PC-9 (cell line): ENCODE measurements at regions of chr1 and their contacts with region 1.

Region 1: GRCh38 chr1:23559136-23559984 is at the start of gene ID3:
- DNase-seq: peak; percentile 87 to 96
- H3K4me3 ChIP-seq: peak within 1 kb of the TSS; percentile 67
- H3K27ac ChIP-seq: peak within 1 kb of the TSS; percentile 96
- H3K4me1 ChIP-seq: peaks cover 42% of the 10 kb centered on the region
- H3K27me3 ChIP-seq: no peaks in the 10 kb centered on the region
- CTCF ChIP-seq: no peak
- total RNA-seq, gene ID3: 10.4 and 24.7 TPM in 2 replicates

Region 2: GRCh38 chr1:23544444-23545389 is 14.6 kb before region 1 on chr1:
- CTCF ChIA-PET with region 1: no interaction called
- POLR2A ChIA-PET with region 1: no interaction called
- intact Hi-C with region 1: no loop called
- DNase-seq: peak; percentile 53 to 73
- H3K4me3 ChIP-seq: no peak overlapping the region
- H3K27ac ChIP-seq: no peak overlapping the region
- H3K4me1 ChIP-seq: peaks cover 4% of the 10 kb centered on the region; the same call in 1 of the 2 replicates
- H3K27me3 ChIP-seq: no peaks in the 10 kb centered on the region
- CTCF ChIP-seq: peak; percentile 86

Region 3: DNA sequence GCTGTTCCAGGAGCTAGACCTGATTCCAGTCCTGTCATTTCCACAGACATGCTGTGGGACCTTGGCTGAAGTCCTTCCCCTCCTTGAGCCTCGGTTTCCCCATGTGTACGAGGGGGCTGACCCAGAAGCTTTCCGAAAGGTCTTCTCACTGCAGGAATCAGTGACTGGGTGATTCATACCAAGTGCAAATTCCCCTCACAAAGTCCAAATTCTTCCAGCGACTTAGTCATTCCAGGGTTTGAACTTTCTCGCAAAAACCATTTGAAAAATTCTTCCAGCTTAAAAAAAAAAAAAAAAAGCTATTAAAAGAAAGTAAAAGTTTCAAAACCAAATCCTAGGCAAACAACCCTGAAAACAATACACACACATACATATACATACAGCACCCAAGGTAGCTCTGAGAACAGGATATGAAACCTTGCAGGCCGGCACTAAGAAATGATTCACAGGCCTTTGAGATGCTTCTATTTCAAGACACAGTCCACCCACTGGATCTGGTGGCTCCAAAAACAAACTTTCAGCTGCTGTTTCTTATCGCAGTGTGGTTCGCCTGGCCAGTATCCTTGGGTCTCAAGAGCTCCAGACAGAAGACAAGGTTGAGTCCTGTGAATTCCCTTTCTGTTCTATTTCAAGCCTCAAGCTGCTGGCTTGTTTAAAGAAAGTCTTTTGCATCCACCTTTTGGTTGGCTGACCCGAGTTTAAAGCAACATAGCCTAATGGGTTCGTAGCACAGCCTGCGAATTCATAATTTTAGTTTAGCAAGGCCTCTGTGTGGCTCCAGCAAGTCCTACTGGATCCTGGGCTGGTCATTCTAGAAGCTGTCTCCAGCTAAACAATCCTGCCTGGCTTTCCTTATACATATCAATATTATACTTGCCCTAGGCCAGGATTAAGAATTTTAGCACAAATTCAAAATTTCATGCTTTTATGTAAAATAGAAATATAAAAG is 18.0 kb after region 1 on chr1:
- CTCF ChIA-PET with region 1: interaction called, 4 read pairs
- POLR2A ChIA-PET with region 1: interaction called, 33 read pairs
- intact Hi-C with region 1: loop called (anchors 2 kb)
- DNase-seq: peak in 1 of 2 experiments; percentile 84
- H3K4me3 ChIP-seq: no peak overlapping the region; the same call in 1 of the 2 replicates
- H3K27ac ChIP-seq: peak overlapping the region; percentile 93
- H3K4me1 ChIP-seq: peaks cover 55% of the 10 kb centered on the region
- H3K27me3 ChIP-seq: no peaks in the 10 kb centered on the region
- CTCF ChIP-seq: no peak

Region 4: DNA sequence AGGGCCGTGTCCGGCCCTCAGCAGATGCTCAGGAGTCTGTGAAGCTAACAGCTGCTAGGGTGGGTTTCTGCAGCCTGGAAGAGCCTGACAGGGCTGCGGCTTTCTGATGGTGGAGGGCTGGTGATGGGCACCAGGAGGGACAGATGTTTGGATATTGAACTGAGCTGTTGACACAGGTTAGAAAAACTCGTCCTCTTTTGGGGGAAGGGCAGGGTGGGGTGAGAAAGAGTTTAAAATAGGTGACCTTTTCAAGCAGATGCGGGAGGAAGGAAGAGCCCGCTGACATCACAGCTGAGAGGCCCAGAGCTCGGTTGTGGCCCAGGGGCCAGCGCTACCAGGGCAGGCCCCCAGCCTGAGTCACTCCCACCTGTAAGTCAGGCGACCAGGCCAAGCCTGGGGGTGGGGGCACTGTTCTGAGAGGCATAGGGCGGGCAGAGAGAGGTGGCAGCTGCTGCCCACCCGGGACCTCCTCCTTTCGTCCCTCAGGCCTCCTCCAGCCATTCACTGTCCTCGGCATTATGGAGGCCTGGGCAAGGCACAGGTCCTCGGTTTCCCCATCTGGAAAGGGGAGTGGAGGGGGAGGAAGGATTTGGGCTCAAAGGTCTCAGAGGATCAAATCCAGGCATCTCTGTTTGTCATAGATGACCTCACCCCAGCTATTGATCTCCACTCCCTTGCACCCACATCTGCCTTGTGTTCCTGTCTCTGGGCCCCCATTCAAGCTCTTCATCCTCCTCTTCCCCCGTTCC is 32.3 kb after region 1 on chr1:
- CTCF ChIA-PET with region 1: interaction called, 14 read pairs
- POLR2A ChIA-PET with region 1: interaction called, 14 read pairs
- intact Hi-C with region 1: loop called (anchors 1 kb)
- DNase-seq: no peak
- H3K4me3 ChIP-seq: no peak overlapping the region
- H3K27ac ChIP-seq: peak overlapping the region; percentile 93; the same call in 1 of the 2 replicates
- H3K4me1 ChIP-seq: peaks cover 39% of the 10 kb centered on the region
- H3K27me3 ChIP-seq: no peaks in the 10 kb centered on the region
- CTCF ChIP-seq: no peak

Region 5: GRCh38 chr1:23619299-23620188 is 60.2 kb after region 1 on chr1:
- CTCF ChIA-PET with region 1: no interaction called
- POLR2A ChIA-PET with region 1: interaction called, 11 read pairs
- intact Hi-C with region 1: no loop called
- DNase-seq: peak; percentile 46 to 61
- H3K4me3 ChIP-seq: peak overlapping the region; percentile 42; the same call in 1 of the 2 replicates
- H3K27ac ChIP-seq: no peak overlapping the region
- H3K4me1 ChIP-seq: no peaks in the 10 kb centered on the region
- H3K27me3 ChIP-seq: no peaks in the 10 kb centered on the region
- CTCF ChIP-seq: no peak

Region 6: GRCh38 chr1:23634842-23635651 is 75.7 kb after region 1 on chr1:
- CTCF ChIA-PET with region 1: interaction called, 6 read pairs
- POLR2A ChIA-PET with region 1: interaction called, 5 read pairs
- intact Hi-C with region 1: loop called (anchors 2 kb)
- DNase-seq: peak; percentile 59 to 62
- H3K4me3 ChIP-seq: peak overlapping the region; percentile 54; the same call in 1 of the 2 replicates
- H3K27ac ChIP-seq: peak overlapping the region; percentile 30; the same call in 1 of the 2 replicates
- H3K4me1 ChIP-seq: no peaks in the 10 kb centered on the region
- H3K27me3 ChIP-seq: no peaks in the 10 kb centered on the region
- CTCF ChIP-seq: peak; percentile 80

Region 7: GRCh38 chr1:24235921-24236781 is 676.8 kb after region 1 on chr1:
- CTCF ChIA-PET with region 1: no interaction called
- POLR2A ChIA-PET with region 1: no interaction called
- intact Hi-C with region 1: no loop called
- DNase-seq: peak; percentile 30 to 62
- H3K4me3 ChIP-seq: no peak overlapping the region
- H3K27ac ChIP-seq: peak overlapping the region; percentile 82
- H3K4me1 ChIP-seq: peaks cover 22% of the 10 kb centered on the region
- H3K27me3 ChIP-seq: no peaks in the 10 kb centered on the region
- CTCF ChIP-seq: no peak